ENCODE measurements at regions of chr1 and their contacts with region 1.

Region 1: GRCh38 chr1:202957733-202958543 is at the start of gene ADIPOR1:
- DNase-seq: peak; percentile 83 to 88 (median 87)
- H3K4me3 ChIP-seq: peak within 1 kb of the TSS; percentile 59 to 93 (median 91)
- H3K4me3 Mint-ChIP-seq: peak within 1 kb of the TSS; percentile 87 to 92
- H3K27ac ChIP-seq: peak within 1 kb of the TSS; percentile 75 to 98
- H3K27ac Mint-ChIP-seq: peak within 1 kb of the TSS; percentile 88 to 95 (median 91)
- H3K4me1 ChIP-seq: peaks cover 44 to 54% of the 10 kb centered on the region in 2 donors
- H3K4me1 Mint-ChIP-seq: peaks cover 51% of the 10 kb centered on the region
- H3K27me3 ChIP-seq: no peaks in the 10 kb centered on the region
- H3K27me3 Mint-ChIP-seq: peaks cover 0 to 2% (median 0%) of the 10 kb centered on the region in 3 donors
- CTCF ChIP-seq: peak; percentile 20
- polyA plus RNA-seq, gene ADIPOR1: 140 to 216 (median 197) TPM

Region 2: GRCh38 chr1:203006948-203007871 is 49.3 kb after region 1 on chr1 and contains the start of gene TMEM183A:
- intact Hi-C with region 1: loop called in 1 of 2 experiments (anchors 10 kb)
- DNase-seq: peak; percentile 95 to 96 (median 95)
- H3K4me3 ChIP-seq: peak within 1 kb of the TSS; percentile 64 to 100 (median 72)
- H3K4me3 Mint-ChIP-seq: peak within 1 kb of the TSS; percentile 91 to 97
- H3K27ac ChIP-seq: peak within 1 kb of the TSS; percentile 81 to 98
- H3K27ac Mint-ChIP-seq: peak within 1 kb of the TSS; percentile 96 to 99 (median 98)
- H3K4me1 ChIP-seq: peaks cover 20 to 23% of the 10 kb centered on the region in 2 donors
- H3K4me1 Mint-ChIP-seq: peaks cover 24% of the 10 kb centered on the region
- H3K27me3 ChIP-seq: no peaks in the 10 kb centered on the region
- H3K27me3 Mint-ChIP-seq: peaks cover 0 to 3% (median 0%) of the 10 kb centered on the region in 3 donors
- CTCF ChIP-seq: no peak
- polyA plus RNA-seq, gene TMEM183A: 60.5 to 84.9 (median 70.0) TPM

Region 3: DNA sequence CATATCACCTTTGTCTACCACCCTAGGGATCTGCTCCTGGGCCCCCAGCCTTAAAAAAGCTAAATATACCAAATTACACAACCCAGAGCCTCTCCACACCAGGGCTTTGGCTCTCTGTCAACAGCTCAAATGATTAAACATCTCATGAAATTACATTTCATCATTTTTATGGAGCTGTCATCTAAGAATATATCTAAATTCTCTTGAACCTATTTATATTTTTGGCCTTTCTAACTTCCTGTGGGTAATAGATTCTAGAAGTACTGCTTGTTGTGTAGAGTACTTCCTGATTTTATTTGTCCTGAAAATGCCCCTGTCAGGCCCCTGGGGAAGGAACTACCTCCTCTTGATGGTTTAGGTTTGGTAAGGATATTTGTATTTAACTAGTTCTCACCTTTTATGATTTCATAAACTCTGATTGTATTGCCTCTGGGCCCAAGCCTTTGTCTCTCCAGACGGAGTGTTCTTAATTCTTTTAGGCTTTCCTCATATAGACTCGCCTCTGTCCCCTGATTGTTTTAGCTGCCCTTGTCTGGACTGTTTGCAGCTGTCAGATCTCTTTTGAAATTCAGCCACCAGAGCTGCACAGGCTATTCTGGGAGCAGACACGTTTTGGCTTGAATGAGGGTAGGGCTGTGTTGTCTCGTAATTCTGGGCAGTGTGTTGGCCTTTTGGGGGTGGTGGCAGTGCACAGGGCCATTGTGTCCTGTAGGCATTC is 111.3 kb after region 1 on chr1:
- intact Hi-C with region 1: no loop called
- DNase-seq: peak; percentile 32 to 55 (median 48)
- H3K4me3 ChIP-seq: peak overlapping the region in 1 of 3 experiments; percentile 15
- H3K4me3 Mint-ChIP-seq: peak overlapping the region; percentile 13 to 72
- H3K27ac ChIP-seq: no peak overlapping the region
- H3K27ac Mint-ChIP-seq: peak overlapping the region in 4 of 7 donors; percentile 54 to 84 (median 70)
- H3K4me1 ChIP-seq: peaks cover 32 to 34% of the 10 kb centered on the region in 2 donors
- H3K4me1 Mint-ChIP-seq: peaks cover 56% of the 10 kb centered on the region
- H3K27me3 ChIP-seq: no peaks in the 10 kb centered on the region
- H3K27me3 Mint-ChIP-seq: peaks cover 2 to 4% (median 4%) of the 10 kb centered on the region in 3 donors
- CTCF ChIP-seq: no peak

Measured in CD14-positive monocyte (primary cell).